Posterior vena cava (tissue), 2 donors: ENCODE measurements at regions of chr3 and their contacts with region 1.

Region 1: DNA sequence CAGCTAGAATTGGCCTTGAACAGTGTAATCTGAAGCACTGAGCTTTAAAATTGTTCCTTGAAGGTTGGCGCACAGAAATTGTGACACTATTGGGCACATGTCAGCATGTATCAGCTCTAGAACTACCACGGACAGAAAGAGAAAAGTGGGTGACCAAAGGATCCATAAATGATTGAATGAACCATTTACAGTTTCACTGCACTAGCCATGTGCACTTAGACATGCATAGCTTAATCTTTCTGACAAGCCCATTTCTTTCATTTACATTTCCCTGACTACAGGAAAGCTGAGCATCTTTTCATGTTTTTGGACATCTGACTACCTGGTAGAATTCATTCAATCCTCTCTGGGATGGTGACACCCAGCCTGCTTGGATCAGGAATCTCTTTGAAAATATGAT is 36.2 kb downstream of the NUDT16 start:
- DNase-seq: no peak

Region 2: GRCh38 chr3:131582438-131582837 is 164.7 kb after region 1 on chr3:
- intact Hi-C with region 1: loop called in 1 of 2 experiments (anchors 5 kb)
- DNase-seq: no peak